ENCODE measurements at regions of chr11 and their contacts with region 1.

Region 1: GRCh38 chr11:1126935-1127663 is 30.7 kb upstream of the MUC5AC start:
- DNase-seq: no peak
- H3K4me3 ChIP-seq: no peak overlapping the region
- H3K27ac ChIP-seq: no peak overlapping the region
- H3K4me1 ChIP-seq: no peaks in the 10 kb centered on the region
- H3K27me3 ChIP-seq: peaks cover 0 to 46% of the 10 kb centered on the region in 2 donors
- CTCF ChIP-seq: no peak
- POLR2A ChIP-seq: no peak

Region 2: DNA sequence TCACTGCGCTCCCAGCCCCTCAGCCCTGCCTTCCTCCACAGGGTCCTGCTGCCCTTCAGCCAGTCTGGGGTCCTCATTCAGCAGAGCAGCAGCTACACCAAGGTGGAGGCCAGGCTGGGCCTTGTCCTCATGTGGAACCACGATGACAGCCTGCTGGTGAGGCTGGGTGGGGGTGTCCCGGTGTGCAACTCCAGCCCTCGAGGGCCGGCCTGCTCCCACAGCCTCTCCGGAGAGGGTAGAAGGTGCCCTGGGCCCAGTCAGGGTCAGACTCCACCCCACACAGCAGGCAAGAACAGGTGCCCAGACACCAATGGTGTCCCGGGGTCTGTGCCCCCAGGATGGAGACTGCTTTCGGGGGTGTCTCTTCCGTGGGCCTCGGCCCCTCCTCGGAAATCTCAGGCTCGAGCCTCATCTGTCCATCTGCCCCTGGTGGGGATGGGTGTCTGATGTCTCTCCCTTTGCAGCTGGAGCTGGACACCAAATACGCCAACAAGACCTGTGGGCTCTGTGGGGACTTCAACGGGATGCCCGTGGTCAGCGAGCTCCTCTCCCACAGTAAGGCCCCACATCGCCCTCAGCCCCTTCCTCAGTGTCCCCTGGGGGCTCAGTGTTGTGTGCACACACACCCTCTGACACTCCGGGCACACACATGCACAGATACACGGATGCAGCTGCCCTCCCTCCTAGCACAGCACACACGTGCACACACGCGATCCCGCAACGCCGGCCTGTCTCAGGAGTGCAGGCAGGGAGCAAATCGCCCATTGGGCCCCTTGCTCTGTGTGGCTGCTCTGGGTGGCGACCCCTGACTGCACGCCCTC is 35.6 kb after region 1 on chr11:
- intact Hi-C with region 1: loop called (anchors 1 kb)
- DNase-seq: peak in 1 of 2 donors; percentile 37
- H3K4me3 ChIP-seq: no peak overlapping the region
- H3K27ac ChIP-seq: no peak overlapping the region
- H3K4me1 ChIP-seq: no peaks in the 10 kb centered on the region
- H3K27me3 ChIP-seq: peaks cover 0 to 65% of the 10 kb centered on the region in 2 donors
- CTCF ChIP-seq: no peak
- POLR2A ChIP-seq: no peak

Region 3: DNA sequence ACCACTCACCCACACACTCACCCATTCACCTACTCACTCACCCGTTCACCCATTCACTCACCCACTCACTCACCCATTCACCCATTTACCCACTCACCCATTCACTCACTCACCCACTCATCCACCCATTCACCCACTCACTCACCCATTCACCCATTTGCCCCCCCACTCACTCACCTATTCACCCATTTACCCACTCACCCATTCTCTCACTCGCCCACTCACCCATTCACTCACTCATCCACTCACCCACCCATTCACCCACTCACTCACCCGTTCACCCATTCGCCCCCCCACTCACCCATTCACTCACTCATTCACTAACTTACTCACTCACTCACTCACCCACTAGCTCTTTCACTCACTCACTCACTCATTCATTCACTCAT is 45.6 kb after region 1 on chr11:
- intact Hi-C with region 1: no loop called
- DNase-seq: no peak
- H3K4me3 ChIP-seq: no peak overlapping the region
- H3K27ac ChIP-seq: no peak overlapping the region
- H3K4me1 ChIP-seq: no peaks in the 10 kb centered on the region
- H3K27me3 ChIP-seq: no peaks in the 10 kb centered on the region
- CTCF ChIP-seq: no peak
- POLR2A ChIP-seq: no peak